CD4-positive, alpha-beta memory T cell (primary cell): ENCODE measurements at regions of chr16 and their contacts with region 1.

Region 1: DNA sequence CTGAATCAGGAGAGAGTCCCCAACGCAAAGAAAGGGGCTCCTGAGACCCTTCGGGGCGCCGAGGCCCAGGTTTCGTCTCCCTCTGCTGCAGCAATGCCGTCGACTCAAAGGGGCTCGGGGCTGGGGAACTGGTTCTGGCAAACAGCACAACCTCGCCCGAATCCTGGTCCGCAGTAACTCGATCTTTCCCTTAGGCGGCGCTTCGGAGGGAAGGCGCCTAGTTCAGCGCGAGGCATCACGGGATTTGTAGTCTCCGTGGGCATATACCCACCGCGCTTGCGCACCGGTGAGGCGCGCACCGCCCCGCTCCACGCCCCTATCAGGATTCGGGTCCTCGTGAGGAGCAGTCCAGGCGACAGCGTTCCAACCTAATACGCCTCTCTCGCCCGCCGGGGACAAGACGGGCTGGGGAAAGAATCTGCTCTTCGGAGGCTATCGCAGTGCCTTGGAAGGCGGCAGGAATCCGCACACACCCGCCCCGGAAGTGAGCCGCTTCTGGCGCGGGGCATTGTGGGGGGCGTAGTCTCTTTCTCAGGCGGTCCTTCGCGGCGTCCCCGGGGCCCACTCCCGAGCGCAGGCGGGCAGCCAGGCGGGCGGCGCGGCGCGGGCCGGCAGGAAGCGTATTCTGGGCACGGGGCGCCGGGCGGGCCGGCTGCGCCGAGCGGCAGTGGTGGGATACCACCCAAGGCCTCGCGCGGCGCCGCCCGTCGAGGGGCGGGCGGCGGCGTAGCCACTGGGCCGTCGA is at the start of gene THAP11:
- DNase-seq: peak; percentile 94 to 98 (median 95)
- H3K4me3 ChIP-seq: peak within 1 kb of the TSS; percentile 74 to 99
- H3K4me3 Mint-ChIP-seq: peak within 1 kb of the TSS; percentile 93 to 98 (median 96)
- H3K27ac ChIP-seq: peak within 1 kb of the TSS; percentile 98
- H3K27ac Mint-ChIP-seq: peak within 1 kb of the TSS; percentile 97 to 99 (median 98)
- H3K4me1 ChIP-seq: peaks cover 38% of the 10 kb centered on the region
- H3K4me1 Mint-ChIP-seq: peaks cover 25 to 48% (median 36%) of the 10 kb centered on the region in 4 donors
- H3K27me3 ChIP-seq: no peaks in the 10 kb centered on the region
- H3K27me3 Mint-ChIP-seq: no peaks in the 10 kb centered on the region
- total RNA-seq, gene THAP11: 56.8 to 58.4 TPM

Region 2: DNA sequence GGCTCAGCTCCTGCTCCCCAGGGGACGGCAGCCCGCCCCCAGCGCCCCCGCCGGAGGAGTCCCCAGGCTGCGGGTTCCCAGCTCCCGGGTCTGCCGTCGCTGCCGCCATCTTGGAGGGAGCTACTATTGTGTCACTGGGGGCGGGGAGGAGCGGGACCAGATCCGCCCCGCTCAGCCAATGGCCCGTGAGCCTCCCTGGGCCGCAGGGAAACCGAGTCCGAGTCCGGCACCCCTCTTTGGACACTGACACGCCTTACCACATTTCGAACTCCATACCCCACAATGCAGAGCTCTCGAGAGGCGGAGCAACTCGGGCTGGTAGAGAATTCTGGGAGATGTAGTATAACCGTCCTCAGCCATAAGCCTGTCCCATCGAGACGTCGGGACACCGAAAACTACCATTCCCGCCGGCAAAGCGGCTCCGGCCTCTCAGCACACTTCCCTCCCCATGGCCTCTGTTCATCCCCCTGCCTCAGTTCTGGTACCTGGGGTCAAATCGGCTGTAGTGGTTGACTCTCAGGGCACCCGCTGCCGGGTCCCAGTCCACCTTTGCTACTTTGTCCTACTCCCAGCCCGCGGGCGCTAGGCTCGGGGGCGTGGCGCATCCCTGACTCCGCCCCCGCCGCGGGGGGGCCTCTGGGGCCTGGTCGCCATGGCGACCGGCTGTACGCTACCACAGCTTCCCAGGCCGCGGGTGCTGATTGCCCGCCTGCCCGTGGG is 35.3 kb before region 1 on chr16 and contains the starts of genes RANBP10 and TSNAXIP1:
- CTCF ChIA-PET with region 1: interaction called, 5 read pairs
- POLR2A ChIA-PET with region 1: interaction called, 19 read pairs
- intact Hi-C with region 1: loop called (anchors 1 kb)
- DNase-seq: peak; percentile 97 to 99 (median 99)
- H3K4me3 ChIP-seq: peak within 1 kb of the TSS; percentile 91 to 93
- H3K4me3 Mint-ChIP-seq: peak within 1 kb of the TSS; percentile 88 to 95 (median 90)
- H3K27ac ChIP-seq: peak within 1 kb of the TSS; percentile 95
- H3K27ac Mint-ChIP-seq: peak within 1 kb of the TSS; percentile 85 to 98 (median 95)
- H3K4me1 ChIP-seq: peaks cover 43% of the 10 kb centered on the region
- H3K4me1 Mint-ChIP-seq: peaks cover 26 to 52% (median 36%) of the 10 kb centered on the region in 4 donors
- H3K27me3 ChIP-seq: no peaks in the 10 kb centered on the region
- H3K27me3 Mint-ChIP-seq: no peaks in the 10 kb centered on the region
- total RNA-seq, gene RANBP10: 25.6 to 27.8 TPM
- total RNA-seq, gene TSNAXIP1: 0.44 to 0.64 TPM

Region 3: GRCh38 chr16:67872786-67873537 is 31.0 kb after region 1 on chr16 and contains the start of gene EDC4:
- CTCF ChIA-PET with region 1: interaction called, 3 read pairs
- POLR2A ChIA-PET with region 1: interaction called, 17 read pairs
- intact Hi-C with region 1: loop called (anchors 1 kb)
- DNase-seq: peak; percentile 83 to 89 (median 85)
- H3K4me3 ChIP-seq: peak within 1 kb of the TSS; percentile 88 to 90
- H3K4me3 Mint-ChIP-seq: peak within 1 kb of the TSS; percentile 82 to 95 (median 94)
- H3K27ac ChIP-seq: peak within 1 kb of the TSS; percentile 91
- H3K27ac Mint-ChIP-seq: peak within 1 kb of the TSS; percentile 82 to 96 (median 95)
- H3K4me1 ChIP-seq: peaks cover 36% of the 10 kb centered on the region
- H3K4me1 Mint-ChIP-seq: peaks cover 25 to 43% (median 33%) of the 10 kb centered on the region in 4 donors
- H3K27me3 ChIP-seq: no peaks in the 10 kb centered on the region
- H3K27me3 Mint-ChIP-seq: no peaks in the 10 kb centered on the region
- total RNA-seq, gene EDC4: 141 to 144 TPM

Region 4: DNA sequence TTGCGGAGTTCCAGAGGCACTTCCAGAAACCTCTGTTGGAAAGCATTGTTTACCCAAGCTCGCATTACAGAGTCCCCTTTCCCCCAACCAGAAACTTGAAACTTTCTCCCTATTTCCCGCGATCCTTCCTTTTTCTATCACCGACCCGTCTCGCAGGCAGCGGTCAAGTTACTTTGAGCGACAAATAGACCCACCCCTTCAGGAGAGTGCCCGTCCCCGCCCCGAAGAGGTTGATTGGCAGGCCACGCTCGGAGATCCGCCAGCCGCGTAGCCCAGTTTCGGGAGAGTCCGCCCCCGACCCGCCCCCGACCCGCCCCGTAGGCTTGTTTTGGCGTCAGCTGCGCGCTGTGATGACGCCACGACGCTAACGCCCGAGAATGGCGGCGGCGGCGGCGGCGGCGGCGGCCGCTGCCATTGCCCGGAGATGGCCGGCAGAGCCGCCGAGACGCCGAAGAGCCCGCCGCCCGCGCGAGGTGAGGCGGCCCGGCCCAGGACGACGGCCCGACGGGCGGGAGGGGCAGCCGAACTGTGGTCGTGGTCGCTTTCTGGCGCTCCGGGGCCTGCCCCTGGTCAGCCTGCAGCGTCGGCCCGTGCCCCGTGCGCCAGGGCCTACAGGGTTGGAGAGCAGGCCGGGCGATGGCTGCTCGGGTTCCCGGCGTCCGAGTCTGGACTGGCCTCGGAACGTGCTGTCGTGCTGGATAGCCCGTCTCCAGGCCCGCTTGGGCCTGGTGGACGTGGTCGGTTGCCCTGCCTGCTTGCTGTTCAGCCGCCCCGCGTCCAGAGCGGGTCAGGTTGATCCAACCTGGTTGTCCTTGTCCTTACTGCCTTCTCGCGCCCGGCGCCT is 51.2 kb after region 1 on chr16 and contains the start of gene PSKH1:
- CTCF ChIA-PET with region 1: no interaction called
- POLR2A ChIA-PET with region 1: interaction called, 4 read pairs
- intact Hi-C with region 1: loop called (anchors 1 kb)
- DNase-seq: peak; percentile 86 to 95 (median 87)
- H3K4me3 ChIP-seq: peak within 1 kb of the TSS; percentile 76 to 90
- H3K4me3 Mint-ChIP-seq: peak within 1 kb of the TSS; percentile 89 to 98 (median 96)
- H3K27ac ChIP-seq: peak within 1 kb of the TSS; percentile 95
- H3K27ac Mint-ChIP-seq: peak within 1 kb of the TSS; percentile 96 to 98 (median 97)
- H3K4me1 ChIP-seq: peaks cover 20% of the 10 kb centered on the region
- H3K4me1 Mint-ChIP-seq: peaks cover 12 to 48% (median 39%) of the 10 kb centered on the region in 4 donors
- H3K27me3 ChIP-seq: no peaks in the 10 kb centered on the region
- H3K27me3 Mint-ChIP-seq: no peaks in the 10 kb centered on the region
- total RNA-seq, gene PSKH1: 22.3 to 25.1 TPM

Region 5: DNA sequence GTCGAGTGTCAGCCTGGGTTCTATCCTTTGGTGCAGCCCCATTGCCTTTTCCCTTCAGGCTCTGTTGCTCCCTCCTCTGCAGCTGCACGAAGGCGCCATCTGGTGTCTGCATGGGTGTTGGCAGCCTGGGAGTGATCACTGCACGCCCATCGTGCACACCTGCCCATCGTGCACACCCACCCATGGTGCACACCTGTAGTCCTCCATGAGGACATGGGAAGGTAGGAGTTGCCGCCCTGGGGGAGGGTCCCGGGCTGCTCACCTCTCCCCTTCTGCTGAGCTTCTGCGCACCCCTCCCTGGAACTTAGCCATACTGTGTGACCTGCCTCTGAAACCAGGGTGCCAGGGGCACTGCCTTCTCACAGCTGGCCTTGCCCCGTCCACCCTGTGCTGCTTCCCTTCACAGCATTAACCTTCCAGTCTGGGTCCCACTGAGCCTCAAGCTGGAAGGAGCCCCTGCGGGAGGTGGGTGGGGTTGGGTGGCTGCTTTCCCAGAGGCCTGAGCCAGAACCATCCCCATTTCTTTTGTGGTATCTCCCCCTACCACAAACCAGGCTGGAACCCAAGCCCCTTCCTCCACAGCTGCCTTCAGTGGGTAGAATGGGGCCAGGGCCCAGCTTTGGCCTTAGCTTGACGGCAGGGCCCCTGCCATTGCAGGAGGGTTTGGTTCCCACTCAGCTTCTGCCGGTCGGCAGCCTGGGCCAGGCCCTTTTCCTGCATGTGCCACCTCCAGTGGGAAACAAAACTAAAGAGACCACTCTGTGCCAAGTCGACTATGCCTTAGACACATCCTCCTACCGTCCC is 86.8 kb after region 1 on chr16:
- CTCF ChIA-PET with region 1: interaction called, 4 read pairs
- POLR2A ChIA-PET with region 1: no interaction called
- intact Hi-C with region 1: loop called (anchors 1 kb)
- DNase-seq: peak; percentile 70 to 75 (median 72)
- H3K4me3 ChIP-seq: no peak overlapping the region
- H3K4me3 Mint-ChIP-seq: no peak overlapping the region
- H3K27ac ChIP-seq: no peak overlapping the region
- H3K27ac Mint-ChIP-seq: peak overlapping the region; percentile 22 to 74 (median 69)
- H3K4me1 ChIP-seq: peaks cover 7% of the 10 kb centered on the region
- H3K4me1 Mint-ChIP-seq: peaks cover 3 to 16% (median 8%) of the 10 kb centered on the region in 4 donors
- H3K27me3 ChIP-seq: no peaks in the 10 kb centered on the region
- H3K27me3 Mint-ChIP-seq: no peaks in the 10 kb centered on the region